Activated B cell treated with CpG ODN at 0.5 μM for 24 hours (primary cell): ENCODE measurements at regions of chr15 and their contacts with region 1.

Region 1: GRCh38 chr15:67839929-67840748 is at the start of gene RNU6-1:
- DNase-seq: peak; percentile 93
- ATAC-seq: peak; percentile 82
- H3K4me3 Mint-ChIP-seq: peak within 1 kb of the TSS; percentile 95
- H3K27ac Mint-ChIP-seq: peak within 1 kb of the TSS; percentile 93
- H3K4me1 Mint-ChIP-seq: peaks cover 40% of the 10 kb centered on the region
- H3K27me3 Mint-ChIP-seq: peaks cover 16% of the 10 kb centered on the region
- CTCF ChIP-seq: no peak
- total RNA-seq, gene RNU6-1: not detected in 2 replicates

Region 2: DNA sequence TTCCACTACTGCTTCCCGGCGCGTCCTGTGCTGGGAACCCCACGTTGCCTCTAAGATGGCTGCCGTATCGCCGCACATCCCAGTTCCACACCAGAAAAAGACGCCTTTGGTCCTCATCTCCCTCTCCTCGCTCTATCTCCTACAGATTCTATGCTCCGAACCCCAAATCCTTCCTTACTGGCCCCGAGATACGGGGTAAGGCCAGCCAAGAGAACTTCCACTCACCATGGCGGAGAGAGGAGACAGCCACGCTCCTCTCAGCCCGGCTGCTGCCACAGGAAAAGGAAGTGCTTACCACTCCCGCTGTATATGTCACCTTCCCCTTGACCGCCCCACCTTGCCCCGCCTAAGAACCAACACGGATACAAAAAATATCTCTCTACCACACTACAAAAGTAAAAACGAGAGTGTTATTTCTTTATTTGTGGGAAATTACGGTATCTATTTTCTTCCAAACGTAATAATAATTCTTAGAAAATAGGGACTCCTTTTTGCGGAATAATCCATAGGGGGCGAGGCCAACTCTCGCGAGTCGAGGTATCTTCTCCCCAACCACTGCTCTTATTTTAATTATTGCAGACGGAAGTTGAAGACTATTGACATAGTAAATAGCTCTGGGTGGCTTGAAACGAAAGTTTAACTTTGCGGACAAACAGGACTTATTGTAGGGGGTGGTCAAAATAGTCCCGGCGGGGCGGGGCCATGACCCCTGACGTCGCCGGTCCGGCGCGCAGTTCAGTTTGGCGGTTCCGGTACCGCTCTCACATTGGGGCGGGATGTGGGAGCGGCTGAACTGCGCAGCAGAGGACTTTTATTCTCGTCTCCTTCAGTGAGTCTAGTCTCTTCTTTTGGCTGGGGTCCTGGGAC is 1335.3 kb before region 1 on chr15 and contains the starts of genes RPL4 and ZWILCH:
- CTCF ChIA-PET with region 1: no interaction called
- POLR2A ChIA-PET with region 1: no interaction called
- intact Hi-C with region 1: loop called (anchors 10 kb)
- DNase-seq: peak; percentile 70
- ATAC-seq: peak; percentile 85
- H3K4me3 Mint-ChIP-seq: peak within 1 kb of the TSS; percentile 100
- H3K27ac Mint-ChIP-seq: peak within 1 kb of the TSS; percentile 100
- H3K4me1 Mint-ChIP-seq: peaks cover 42% of the 10 kb centered on the region
- H3K27me3 Mint-ChIP-seq: no peaks in the 10 kb centered on the region
- CTCF ChIP-seq: no peak
- total RNA-seq, gene RPL4: 3,690 and 4,303 TPM in 2 replicates
- total RNA-seq, gene ZWILCH: 8.4 and 13.7 TPM in 2 replicates

Region 3: DNA sequence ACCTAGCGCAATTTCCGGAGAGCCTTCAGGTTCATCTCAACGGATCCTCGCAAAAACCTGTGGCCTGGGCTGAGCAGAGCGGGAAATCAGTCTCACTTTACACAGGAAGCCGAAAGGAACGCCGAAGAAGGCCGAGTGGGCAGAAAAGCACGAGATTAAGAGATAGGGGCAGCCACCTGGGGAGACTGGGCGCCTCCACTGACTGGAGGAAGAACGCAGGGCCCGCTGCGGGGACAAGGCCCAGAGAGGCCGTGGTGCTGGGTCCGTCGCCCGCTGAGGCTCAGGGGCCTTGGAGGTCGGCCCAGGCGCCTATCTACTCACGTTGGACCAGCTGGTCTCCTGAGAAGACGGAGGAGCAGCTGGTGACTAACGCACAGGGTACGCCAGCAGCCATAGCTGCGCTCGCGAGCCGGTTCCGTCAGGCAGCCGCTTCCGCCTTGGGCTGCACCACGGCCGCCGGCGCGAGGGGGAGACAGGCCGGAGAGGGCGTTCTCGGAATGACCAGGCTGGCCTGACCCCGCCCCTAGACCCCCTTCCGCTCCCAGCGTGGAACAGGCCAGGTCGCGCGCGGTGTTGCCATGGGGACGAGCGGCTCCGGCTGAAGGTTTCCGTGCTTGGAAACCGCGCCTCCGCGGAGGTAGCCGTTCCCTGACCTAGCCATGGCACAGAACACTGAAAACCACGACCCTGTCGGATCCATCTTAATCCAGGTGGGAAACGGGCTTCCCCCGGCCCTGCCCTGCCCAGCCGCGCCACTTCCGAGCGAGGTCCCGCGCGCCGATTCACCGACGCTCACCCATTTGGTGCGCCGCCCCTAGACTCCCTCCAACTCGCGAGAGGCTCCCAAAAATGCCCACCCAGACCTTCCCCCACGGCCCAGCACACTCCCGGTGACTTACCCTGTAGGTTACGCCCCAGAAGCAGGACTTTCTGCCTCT is 585.6 kb before region 1 on chr15 and contains the starts of genes AAGAB and IQCH:
- CTCF ChIA-PET with region 1: no interaction called
- POLR2A ChIA-PET with region 1: no interaction called
- intact Hi-C with region 1: loop called (anchors 2 kb)
- DNase-seq: peak; percentile 100
- ATAC-seq: peak; percentile 96
- H3K4me3 Mint-ChIP-seq: peak within 1 kb of the TSS; percentile 99
- H3K27ac Mint-ChIP-seq: peak within 1 kb of the TSS; percentile 95
- H3K4me1 Mint-ChIP-seq: peaks cover 26% of the 10 kb centered on the region
- H3K27me3 Mint-ChIP-seq: no peaks in the 10 kb centered on the region
- CTCF ChIP-seq: no peak
- total RNA-seq, gene AAGAB: 48.5 and 50.8 TPM in 2 replicates
- total RNA-seq, gene IQCH: 1.1 and 1.5 TPM in 2 replicates

Region 4: DNA sequence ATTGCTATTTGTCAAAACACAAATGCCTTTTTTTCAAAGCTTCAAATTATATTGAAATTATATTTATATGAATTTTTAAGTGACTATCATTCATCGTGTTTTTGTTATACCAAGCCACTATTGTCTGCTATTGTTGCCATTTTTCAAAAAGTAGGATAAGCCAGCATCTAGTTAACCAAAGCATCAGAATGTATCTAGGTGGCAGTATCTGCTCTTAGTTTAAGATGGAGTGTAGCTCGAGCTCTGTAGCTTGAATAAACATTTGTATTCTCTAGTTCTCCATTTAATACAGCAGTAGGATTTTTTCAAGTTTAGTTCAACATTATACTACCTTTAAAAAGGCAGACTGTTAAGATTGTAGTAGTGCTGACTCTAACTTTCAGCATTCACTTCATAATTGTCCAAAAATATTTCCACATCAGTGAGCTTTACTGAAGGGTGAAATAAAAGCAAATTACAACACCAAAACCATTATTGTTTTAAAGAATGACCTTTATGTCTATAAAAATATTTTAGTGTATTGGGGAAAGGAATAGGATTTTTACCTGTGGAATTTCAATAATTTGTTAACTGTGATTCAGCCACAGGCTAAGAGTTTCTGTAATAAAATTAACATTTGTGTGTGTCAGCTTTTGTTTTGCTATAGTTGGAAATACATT is 338.8 kb before region 1 on chr15:
- CTCF ChIA-PET with region 1: interaction called, 18 read pairs
- POLR2A ChIA-PET with region 1: no interaction called
- intact Hi-C with region 1: loop called (anchors 1 kb)
- DNase-seq: no peak
- ATAC-seq: no peak
- H3K4me3 Mint-ChIP-seq: no peak overlapping the region
- H3K27ac Mint-ChIP-seq: no peak overlapping the region
- H3K4me1 Mint-ChIP-seq: peaks cover 18% of the 10 kb centered on the region
- H3K27me3 Mint-ChIP-seq: no peaks in the 10 kb centered on the region
- CTCF ChIP-seq: no peak

Region 5: GRCh38 chr15:67784090-67784781 is 55.9 kb before region 1 on chr15:
- CTCF ChIA-PET with region 1: interaction called, 56 read pairs
- POLR2A ChIA-PET with region 1: interaction called, 12 read pairs
- intact Hi-C with region 1: loop called (anchors 1 kb)
- DNase-seq: peak; percentile 60
- ATAC-seq: peak; percentile 81
- H3K4me3 Mint-ChIP-seq: peak overlapping the region; percentile 38
- H3K27ac Mint-ChIP-seq: peak overlapping the region; percentile 87
- H3K4me1 Mint-ChIP-seq: peaks cover 50% of the 10 kb centered on the region
- H3K27me3 Mint-ChIP-seq: no peaks in the 10 kb centered on the region
- CTCF ChIP-seq: no peak

Region 6: GRCh38 chr15:67863442-67863987 is 23.4 kb after region 1 on chr15:
- CTCF ChIA-PET with region 1: interaction called, 8 read pairs
- POLR2A ChIA-PET with region 1: interaction called, 6 read pairs
- intact Hi-C with region 1: loop called (anchors 1 kb)
- DNase-seq: peak; percentile 70
- ATAC-seq: peak; percentile 92
- H3K4me3 Mint-ChIP-seq: peak overlapping the region; percentile 77
- H3K27ac Mint-ChIP-seq: peak overlapping the region; percentile 88
- H3K4me1 Mint-ChIP-seq: peaks cover 17% of the 10 kb centered on the region
- H3K27me3 Mint-ChIP-seq: peaks cover 6% of the 10 kb centered on the region
- CTCF ChIP-seq: peak; percentile 70

Region 7: DNA sequence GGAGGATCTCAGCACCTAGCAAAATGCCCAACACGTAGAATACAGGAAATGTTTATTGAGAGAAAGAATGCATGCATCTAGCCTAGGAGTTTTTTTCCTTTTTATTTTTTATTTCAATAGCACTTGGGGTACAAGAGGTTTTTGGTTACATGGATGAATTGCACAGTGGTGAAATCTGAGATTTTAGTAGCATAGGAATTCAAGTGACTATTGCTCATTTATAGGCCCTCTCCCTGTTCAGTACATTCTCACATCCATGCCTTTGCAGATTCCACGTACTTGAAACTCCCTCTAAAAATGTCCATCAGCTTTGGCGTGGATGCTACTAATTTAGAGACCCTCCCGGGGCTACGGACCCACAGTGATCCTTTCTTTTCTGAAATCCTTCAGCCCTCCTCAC is 152.3 kb after region 1 on chr15:
- CTCF ChIA-PET with region 1: no interaction called
- POLR2A ChIA-PET with region 1: no interaction called
- intact Hi-C with region 1: no loop called
- DNase-seq: no peak
- ATAC-seq: no peak
- H3K4me3 Mint-ChIP-seq: no peak overlapping the region
- H3K27ac Mint-ChIP-seq: no peak overlapping the region
- H3K4me1 Mint-ChIP-seq: no peaks in the 10 kb centered on the region
- H3K27me3 Mint-ChIP-seq: peaks cover 5% of the 10 kb centered on the region
- CTCF ChIP-seq: no peak

Region 8: GRCh38 chr15:68229386-68230156 is 389.4 kb after region 1 on chr15 and contains the start of gene CLN6:
- CTCF ChIA-PET with region 1: no interaction called
- POLR2A ChIA-PET with region 1: interaction called, 3 read pairs
- intact Hi-C with region 1: loop called (anchors 1 kb)
- DNase-seq: peak; percentile 85
- ATAC-seq: peak; percentile 88
- H3K4me3 Mint-ChIP-seq: peak within 1 kb of the TSS; percentile 92
- H3K27ac Mint-ChIP-seq: peak within 1 kb of the TSS; percentile 89
- H3K4me1 Mint-ChIP-seq: peaks cover 50% of the 10 kb centered on the region
- H3K27me3 Mint-ChIP-seq: no peaks in the 10 kb centered on the region
- CTCF ChIP-seq: no peak
- total RNA-seq, gene CLN6: 35.0 and 37.5 TPM in 2 replicates